MCF 10A (cell line): ENCODE measurements at regions of chr20 and their contacts with region 1.

Region 1: GRCh38 chr20:1325173-1326030 is 3.5 kb downstream of the SDCBP2 start:
- DNase-seq: peak; percentile 95
- H3K4me3 Mint-ChIP-seq: no peak overlapping the region
- H3K27ac Mint-ChIP-seq: no peak overlapping the region
- H3K4me1 Mint-ChIP-seq: peaks cover 26% of the 10 kb centered on the region
- H3K27me3 Mint-ChIP-seq: no peaks in the 10 kb centered on the region
- CTCF ChIP-seq: no peak

Region 2: DNA sequence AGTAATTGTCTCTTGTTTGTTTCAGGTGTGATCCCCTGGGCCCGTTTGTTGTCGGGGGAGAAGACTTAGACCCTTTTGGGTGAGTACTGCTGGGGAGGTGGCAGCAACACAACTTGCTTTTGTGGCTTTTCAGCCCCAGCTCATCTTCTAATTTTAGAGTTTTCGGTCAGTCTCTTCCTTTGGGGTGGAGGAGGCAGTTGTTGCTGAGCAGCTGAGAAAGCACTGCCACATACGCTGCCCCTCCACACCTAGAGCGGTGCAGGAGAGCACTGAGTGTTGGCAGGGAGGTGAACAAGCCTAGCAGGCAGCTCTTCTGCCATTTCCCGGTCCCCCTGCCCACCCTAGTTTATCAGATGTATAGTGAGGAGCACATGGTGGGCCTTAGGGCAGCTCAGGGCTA is 162.3 kb before region 1 on chr20:
- CTCF ChIA-PET with region 1: no interaction called
- POLR2A ChIA-PET with region 1: no interaction called
- intact Hi-C with region 1: no loop called
- DNase-seq: no peak
- H3K4me3 Mint-ChIP-seq: no peak overlapping the region
- H3K27ac Mint-ChIP-seq: no peak overlapping the region
- H3K4me1 Mint-ChIP-seq: no peaks in the 10 kb centered on the region
- H3K27me3 Mint-ChIP-seq: no peaks in the 10 kb centered on the region
- CTCF ChIP-seq: no peak

Region 3: GRCh38 chr20:1313236-1313964 is 12.0 kb before region 1 on chr20:
- CTCF ChIA-PET with region 1: interaction called, 20 read pairs
- POLR2A ChIA-PET with region 1: interaction called, 10 read pairs
- intact Hi-C with region 1: no loop called
- DNase-seq: peak; percentile 68
- H3K4me3 Mint-ChIP-seq: no peak overlapping the region
- H3K27ac Mint-ChIP-seq: no peak overlapping the region
- H3K4me1 Mint-ChIP-seq: no peaks in the 10 kb centered on the region
- H3K27me3 Mint-ChIP-seq: no peaks in the 10 kb centered on the region
- CTCF ChIP-seq: peak; percentile 94

Region 4: GRCh38 chr20:1392823-1393506 is 67.6 kb after region 1 on chr20 and contains the start of gene FKBP1A:
- CTCF ChIA-PET with region 1: interaction called, 10 read pairs
- POLR2A ChIA-PET with region 1: interaction called, 184 read pairs
- intact Hi-C with region 1: loop called (anchors 2 kb)
- DNase-seq: peak; percentile 90
- H3K4me3 Mint-ChIP-seq: peak within 1 kb of the TSS; percentile 83
- H3K27ac Mint-ChIP-seq: peak within 1 kb of the TSS; percentile 91
- H3K4me1 Mint-ChIP-seq: peaks cover 31% of the 10 kb centered on the region
- H3K27me3 Mint-ChIP-seq: no peaks in the 10 kb centered on the region
- CTCF ChIP-seq: no peak
- total RNA-seq, gene FKBP1A: 209 and 217 TPM in 2 replicates

Region 5: DNA sequence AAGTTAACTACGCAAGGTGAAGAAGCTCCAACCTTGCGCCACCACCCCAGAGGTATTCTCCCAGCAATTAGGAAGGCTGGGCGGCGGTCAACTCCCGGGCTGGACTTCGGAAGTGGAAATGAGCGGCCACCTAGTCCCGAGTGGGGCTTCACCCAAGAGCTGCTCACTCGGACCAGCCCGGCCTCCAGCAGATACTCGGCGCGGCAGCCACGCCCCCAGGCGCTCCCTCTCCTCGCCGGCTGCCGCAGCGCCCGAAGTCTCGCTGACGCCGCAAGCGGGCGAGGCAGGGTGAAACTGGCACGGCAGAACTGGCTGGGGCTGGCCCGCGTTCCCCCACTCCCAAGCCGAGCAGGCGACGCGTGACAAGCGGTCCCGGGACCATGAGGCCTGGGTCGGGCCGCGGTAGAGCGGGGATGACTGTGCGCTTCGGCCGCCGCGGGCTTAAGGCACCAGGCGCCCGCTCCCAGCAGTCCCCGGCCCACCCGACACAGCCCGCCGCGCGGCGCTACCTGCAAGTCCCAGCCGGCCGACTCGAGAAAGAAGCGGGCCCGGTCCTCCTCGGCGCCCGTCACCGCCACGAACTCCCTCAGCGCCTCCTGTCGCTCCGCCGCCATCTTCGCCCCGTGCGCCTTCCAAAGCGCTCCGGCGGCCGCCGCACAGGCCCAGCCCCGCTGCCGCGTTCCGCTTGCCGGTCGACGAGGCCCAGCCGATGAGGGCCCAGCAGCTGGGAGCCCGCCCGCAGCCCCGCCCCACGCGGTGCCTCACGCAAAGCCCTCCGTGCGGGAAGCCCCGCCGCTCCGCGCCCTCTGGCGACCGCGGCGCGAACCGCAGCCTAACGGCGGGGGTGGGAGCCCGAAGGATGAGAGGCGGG is 141.0 kb after region 1 on chr20 and contains the start of gene NSFL1C:
- CTCF ChIA-PET with region 1: interaction called, 6 read pairs
- POLR2A ChIA-PET with region 1: interaction called, 106 read pairs
- intact Hi-C with region 1: no loop called
- DNase-seq: peak; percentile 91
- H3K4me3 Mint-ChIP-seq: peak within 1 kb of the TSS; percentile 78
- H3K27ac Mint-ChIP-seq: peak within 1 kb of the TSS; percentile 66
- H3K4me1 Mint-ChIP-seq: peaks cover 38% of the 10 kb centered on the region
- H3K27me3 Mint-ChIP-seq: no peaks in the 10 kb centered on the region
- CTCF ChIP-seq: peak; percentile 99
- total RNA-seq, gene NSFL1C: 63.3 and 76.1 TPM in 2 replicates

Region 6: DNA sequence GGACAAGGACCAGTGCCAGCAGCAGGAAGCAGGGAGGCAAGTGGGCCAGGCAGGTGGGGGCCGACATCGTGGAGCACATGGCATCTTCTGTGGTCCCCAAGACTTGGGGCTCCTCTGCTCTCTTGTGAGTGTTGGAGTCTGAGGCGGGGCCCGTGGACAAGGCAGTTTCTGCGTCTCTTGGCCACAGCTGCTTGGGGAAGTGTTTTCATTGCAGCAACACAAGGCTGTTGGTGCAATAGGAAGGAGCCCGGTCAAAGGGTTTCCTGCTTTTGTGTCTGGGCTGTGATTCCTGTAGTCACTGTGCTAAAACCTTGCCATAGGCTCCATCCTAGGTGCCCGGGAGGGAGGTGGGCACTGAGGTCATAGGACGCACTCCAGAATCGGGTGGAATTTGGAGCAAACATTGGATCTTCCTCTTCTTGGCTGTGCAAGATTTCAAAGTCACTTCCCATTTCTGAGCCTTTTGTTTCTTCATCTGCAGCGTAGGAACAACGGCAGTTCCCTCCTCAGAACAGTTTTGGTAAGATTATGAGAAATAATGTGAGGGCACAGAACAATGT is 166.0 kb after region 1 on chr20 and contains the start of gene SIRPB2:
- CTCF ChIA-PET with region 1: no interaction called
- POLR2A ChIA-PET with region 1: interaction called, 12 read pairs
- intact Hi-C with region 1: no loop called
- DNase-seq: no peak
- H3K4me3 Mint-ChIP-seq: peak within 1 kb of the TSS; percentile 12
- H3K27ac Mint-ChIP-seq: peak within 1 kb of the TSS; percentile 92
- H3K4me1 Mint-ChIP-seq: peaks cover 18% of the 10 kb centered on the region
- H3K27me3 Mint-ChIP-seq: no peaks in the 10 kb centered on the region
- CTCF ChIP-seq: no peak
- total RNA-seq, gene SIRPB2: 1.3 and 1.8 TPM in 2 replicates